ENCODE measurements at regions of chr6 and their contacts with region 1.

Region 1: GRCh38 chr6:115495184-115495583 is 565.5 kb downstream of the FRK start:
- DNase-seq: no peak
- ATAC-seq: no peak
- H3K4me3 ChIP-seq: no peak overlapping the region
- H3K27ac ChIP-seq: no peak overlapping the region
- H3K4me1 ChIP-seq: no peaks in the 10 kb centered on the region
- H3K27me3 ChIP-seq: no peaks in the 10 kb centered on the region
- CTCF ChIP-seq: no peak
- POLR2A ChIP-seq: no peak
- RAD21 ChIP-seq: no peak

Region 2: DNA sequence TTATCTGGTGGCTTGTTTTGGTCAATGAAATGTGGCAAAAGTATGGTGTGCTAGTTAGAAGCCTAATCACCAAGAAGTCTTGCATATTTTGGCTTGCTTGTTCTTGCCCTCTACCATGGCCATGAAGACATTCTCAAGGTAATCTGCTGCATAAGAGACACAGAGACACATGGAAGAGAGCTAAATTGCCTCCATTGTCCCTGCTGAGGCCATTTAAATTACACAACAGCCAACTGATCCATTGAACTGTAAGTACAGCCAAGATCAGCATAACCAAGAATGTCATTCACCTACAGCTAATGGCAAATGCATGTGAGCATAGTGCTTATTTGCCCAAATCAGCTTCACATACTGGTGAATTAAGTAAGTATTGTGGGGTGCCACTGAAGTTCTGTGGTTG is 38.3 kb before region 1 on chr6:
- CTCF ChIA-PET with region 1: no interaction called
- POLR2A ChIA-PET with region 1: no interaction called
- dilution Hi-C with region 1: no loop called
- in situ Hi-C with region 1: no loop called
- intact Hi-C with region 1: no loop called
- DNase-seq: no peak
- ATAC-seq: no peak
- H3K4me3 ChIP-seq: no peak overlapping the region
- H3K27ac ChIP-seq: no peak overlapping the region
- H3K4me1 ChIP-seq: no peaks in the 10 kb centered on the region
- H3K27me3 ChIP-seq: no peaks in the 10 kb centered on the region
- CTCF ChIP-seq: no peak
- POLR2A ChIP-seq: no peak
- RAD21 ChIP-seq: no peak

Region 3: GRCh38 chr6:115474443-115475041 is 20.6 kb before region 1 on chr6:
- CTCF ChIA-PET with region 1: no interaction called
- POLR2A ChIA-PET with region 1: interaction called, 18 read pairs
- dilution Hi-C with region 1: no loop called
- in situ Hi-C with region 1: no loop called
- intact Hi-C with region 1: no loop called
- DNase-seq: no peak
- ATAC-seq: no peak
- H3K4me3 ChIP-seq: no peak overlapping the region
- H3K27ac ChIP-seq: no peak overlapping the region
- H3K4me1 ChIP-seq: no peaks in the 10 kb centered on the region
- H3K27me3 ChIP-seq: no peaks in the 10 kb centered on the region
- CTCF ChIP-seq: no peak
- POLR2A ChIP-seq: no peak
- RAD21 ChIP-seq: no peak